ENCODE measurements at regions of chr1 and their contacts with region 1.

Region 1: GRCh38 chr1:31715087-31715872 is 11.5 kb upstream of the COL16A1 start:
- DNase-seq: peak; percentile 97 to 98
- ATAC-seq: peak; percentile 97
- H3K4me3 ChIP-seq: no peak overlapping the region
- H3K27ac ChIP-seq: peak overlapping the region; percentile 47 to 75
- H3K4me1 ChIP-seq: no peaks in the 10 kb centered on the region
- H3K27me3 ChIP-seq: no peaks in the 10 kb centered on the region

Region 2: GRCh38 chr1:31576201-31576669 is 139.0 kb before region 1 on chr1 and contains the start of gene TINAGL1:
- intact Hi-C with region 1: loop called in 1 of 2 experiments (anchors 5 kb)
- DNase-seq: peak in 1 of 2 donors; percentile 90
- ATAC-seq: peak; percentile 42
- H3K4me3 ChIP-seq: peak within 1 kb of the TSS; percentile 65 to 95
- H3K27ac ChIP-seq: peak within 1 kb of the TSS; percentile 82 to 83
- H3K4me1 ChIP-seq: peaks cover 1 to 5% of the 10 kb centered on the region in 2 donors
- H3K27me3 ChIP-seq: no peaks in the 10 kb centered on the region
- total RNA-seq, gene TINAGL1: 317 to 506 TPM

Region 3: DNA sequence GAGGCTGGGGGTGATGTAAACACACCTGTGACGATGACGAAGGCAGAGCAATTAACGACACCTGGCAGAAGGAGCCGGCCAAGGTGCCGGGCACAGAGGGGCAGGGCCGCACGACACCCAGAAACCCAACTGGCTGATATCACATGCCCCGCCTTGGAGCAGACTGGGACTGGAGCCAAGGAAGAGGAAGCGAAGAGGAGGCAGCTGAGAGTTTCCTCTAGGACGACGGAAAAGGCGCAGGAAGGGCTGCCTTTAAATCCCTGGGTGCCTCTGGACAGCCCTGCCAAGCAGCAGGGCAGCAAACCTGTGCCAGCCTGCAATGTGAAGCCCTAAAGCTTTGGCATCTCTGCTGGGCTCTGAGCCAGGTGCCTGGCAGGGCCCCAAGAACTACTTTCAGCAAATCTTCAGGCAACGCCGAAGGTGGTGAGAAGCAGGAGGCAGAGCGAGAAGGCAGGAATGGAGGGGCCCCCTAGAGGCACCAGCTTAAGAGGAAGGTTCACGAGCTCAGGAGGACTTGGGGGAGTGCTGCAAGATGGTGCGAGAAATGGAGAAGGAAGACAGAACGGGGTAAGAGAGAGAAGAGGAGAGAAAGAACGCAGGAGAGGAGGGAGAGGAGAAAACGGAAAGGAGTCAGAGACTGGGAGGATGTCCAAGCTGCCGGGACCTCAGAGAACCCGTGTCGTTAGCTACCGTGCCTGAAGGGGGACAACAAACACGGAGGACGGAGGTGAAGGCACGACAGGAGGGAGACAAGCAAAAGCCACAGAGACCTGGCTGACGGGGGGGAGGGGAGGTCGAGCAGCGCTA is 45.3 kb before region 1 on chr1:
- intact Hi-C with region 1: loop called in 1 of 2 experiments (anchors 2 kb)
- DNase-seq: peak; percentile 86 to 95
- ATAC-seq: peak; percentile 56
- H3K4me3 ChIP-seq: no peak overlapping the region
- H3K27ac ChIP-seq: peak overlapping the region in 1 of 2 donors; percentile 90
- H3K4me1 ChIP-seq: peaks cover 0 to 2% of the 10 kb centered on the region in 2 donors
- H3K27me3 ChIP-seq: no peaks in the 10 kb centered on the region

Region 4: DNA sequence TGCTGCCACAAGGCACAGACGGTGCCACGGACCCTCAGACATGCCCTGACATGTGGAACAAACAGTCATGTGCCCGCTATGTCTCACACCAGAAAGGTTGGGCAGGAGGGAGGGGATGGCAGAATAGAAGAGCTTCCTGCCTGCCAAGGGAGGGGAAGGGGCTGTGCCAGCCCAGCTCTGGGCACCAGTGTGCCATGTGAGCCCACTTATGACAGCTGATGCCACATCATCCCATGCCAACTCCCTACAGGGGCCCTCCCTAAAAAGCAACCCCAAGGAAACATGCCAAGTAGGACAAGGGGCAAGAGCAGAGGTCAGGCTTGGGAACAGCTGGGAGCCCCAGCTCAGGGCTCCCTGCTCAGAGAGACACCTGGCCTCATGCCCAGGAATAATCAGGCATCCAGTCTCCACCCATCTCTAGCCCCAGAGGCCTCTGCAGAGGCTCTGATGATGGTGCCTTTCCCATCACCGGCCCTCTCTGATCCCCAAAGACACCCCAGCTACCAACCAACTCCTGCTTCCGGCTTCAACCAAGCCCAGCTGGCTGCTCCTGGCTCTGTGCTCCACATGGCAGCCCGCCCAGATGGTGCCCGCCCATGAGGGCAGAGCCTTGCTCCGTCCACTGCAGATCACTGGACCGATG is 38.5 kb after region 1 on chr1:
- intact Hi-C with region 1: loop called in 1 of 2 experiments (anchors 5 kb)
- DNase-seq: peak; percentile 75 to 85
- ATAC-seq: no peak
- H3K4me3 ChIP-seq: no peak overlapping the region
- H3K27ac ChIP-seq: peak overlapping the region in 1 of 2 donors; percentile 41
- H3K4me1 ChIP-seq: no peaks in the 10 kb centered on the region
- H3K27me3 ChIP-seq: no peaks in the 10 kb centered on the region

Region 5: GRCh38 chr1:31778763-31779488 is 63.6 kb after region 1 on chr1:
- intact Hi-C with region 1: no loop called
- DNase-seq: no peak
- ATAC-seq: no peak
- H3K4me3 ChIP-seq: no peak overlapping the region
- H3K27ac ChIP-seq: no peak overlapping the region
- H3K4me1 ChIP-seq: no peaks in the 10 kb centered on the region
- H3K27me3 ChIP-seq: no peaks in the 10 kb centered on the region

Region 6: GRCh38 chr1:31789259-31790065 is 74.2 kb after region 1 on chr1:
- intact Hi-C with region 1: loop called in 1 of 2 experiments (anchors 2 kb)
- DNase-seq: peak; percentile 97 to 99
- ATAC-seq: peak; percentile 95
- H3K4me3 ChIP-seq: peak overlapping the region; percentile 5 to 49
- H3K27ac ChIP-seq: no peak overlapping the region
- H3K4me1 ChIP-seq: no peaks in the 10 kb centered on the region
- H3K27me3 ChIP-seq: no peaks in the 10 kb centered on the region